GM10248 (cell line): ENCODE measurements at regions of chr16 and their contacts with region 1.

Region 1: DNA sequence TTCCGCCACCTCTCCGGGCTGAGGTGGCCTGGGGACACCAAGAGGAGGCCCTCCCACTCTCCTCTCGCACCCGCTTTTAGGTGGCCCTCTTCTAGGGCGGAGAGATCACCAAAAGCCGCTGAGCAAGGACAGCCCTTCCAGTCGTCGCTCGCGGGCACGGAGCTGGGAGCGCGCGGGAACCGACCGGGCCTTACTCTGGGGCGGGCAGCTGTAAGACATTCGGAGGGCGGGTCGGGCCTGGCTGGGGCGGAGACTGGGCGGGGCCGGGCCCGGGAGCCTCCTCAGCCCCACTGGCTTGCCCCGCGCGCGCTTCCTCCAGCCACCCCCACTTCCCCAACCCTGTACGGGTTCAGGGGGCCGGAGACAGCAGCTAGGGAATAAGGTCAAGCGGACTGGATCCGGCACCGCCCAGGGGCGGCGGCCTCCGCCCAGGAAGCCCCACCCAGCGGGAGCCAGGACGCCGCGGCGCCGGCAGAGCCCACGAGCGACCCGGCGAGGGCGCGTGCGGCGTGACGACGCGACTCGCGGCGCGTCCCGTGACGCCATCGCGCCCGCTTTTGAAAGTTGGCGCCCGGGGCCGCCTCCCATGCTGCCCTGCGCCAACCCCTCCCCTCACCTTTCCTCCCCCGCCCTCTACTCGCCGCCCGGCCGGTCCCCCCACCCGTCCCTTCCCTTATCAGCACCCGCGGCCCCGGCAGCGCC is 351 bp upstream of the CTCF start:
- DNase-seq: peak; percentile 96
- CTCF ChIP-seq: no peak

Region 2: DNA sequence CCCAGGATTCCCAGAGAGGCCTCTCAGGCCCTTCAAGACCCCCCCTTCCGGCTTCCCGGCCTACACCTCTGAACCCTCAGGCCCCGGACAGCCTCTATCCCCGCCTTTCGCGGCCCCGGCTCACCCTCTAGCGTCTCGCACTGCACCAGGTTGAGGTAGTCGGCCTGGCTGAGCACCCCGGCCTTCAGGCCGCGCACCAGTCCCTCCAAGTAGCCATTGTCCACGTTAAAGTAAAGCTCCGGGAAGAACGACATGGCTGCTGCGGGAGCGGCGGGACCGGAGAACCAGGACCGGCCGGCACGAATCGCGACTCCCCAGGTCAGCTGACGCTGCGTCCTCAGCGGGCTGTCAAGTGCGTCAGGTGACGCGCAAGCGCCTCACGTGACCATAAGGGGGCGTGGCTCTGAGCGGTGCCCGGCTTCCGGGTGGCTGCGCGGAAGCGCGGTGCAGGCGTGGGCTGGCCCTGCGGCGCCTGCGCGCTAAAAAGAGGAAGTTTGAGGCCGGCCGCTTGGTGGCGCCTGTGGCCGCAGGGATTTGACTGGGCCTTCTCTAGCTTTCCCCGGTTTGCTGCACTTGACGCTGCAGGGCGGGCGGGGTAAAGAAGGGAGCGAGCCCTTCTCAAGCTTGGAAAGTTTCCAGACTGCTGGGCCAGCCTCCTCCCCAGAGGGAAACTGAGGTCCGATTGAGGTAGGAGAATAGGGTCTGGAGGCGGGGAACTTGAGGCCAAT is 81.0 kb before region 1 on chr16 and contains the start of gene ATP6V0D1:
- CTCF ChIA-PET with region 1: interaction called, 11 read pairs
- POLR2A ChIA-PET with region 1: interaction called, 4 read pairs
- DNase-seq: peak; percentile 99
- CTCF ChIP-seq: peak; percentile 90

Region 3: DNA sequence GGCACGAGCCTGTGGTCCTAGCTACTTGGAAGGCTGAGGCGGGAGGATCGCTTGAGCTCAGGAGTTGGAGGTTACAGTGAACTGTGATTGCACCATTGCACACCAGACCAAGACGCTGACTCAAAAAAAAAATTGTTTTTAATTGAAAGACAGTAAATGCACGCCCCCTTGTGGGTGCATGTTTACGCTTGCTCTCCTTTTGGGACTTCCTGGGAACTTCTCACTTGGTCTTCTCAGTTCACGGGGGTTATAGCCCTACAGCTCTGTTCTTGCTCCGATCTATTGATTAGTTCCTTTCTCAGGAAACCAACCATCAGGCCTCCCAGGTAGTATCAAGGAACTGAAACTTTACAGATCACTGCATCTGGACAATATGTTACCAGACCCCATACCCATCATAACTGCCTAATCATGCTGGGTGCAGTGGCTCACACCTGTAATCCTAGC is 47.6 kb before region 1 on chr16:
- CTCF ChIA-PET with region 1: interaction called, 12 read pairs
- POLR2A ChIA-PET with region 1: no interaction called
- DNase-seq: peak; percentile 79
- CTCF ChIP-seq: peak; percentile 61

Region 4: GRCh38 chr16:67571981-67572431 is 10.0 kb after region 1 on chr16:
- CTCF ChIA-PET with region 1: interaction called, 27 read pairs
- POLR2A ChIA-PET with region 1: interaction called, 3 read pairs
- DNase-seq: no peak
- CTCF ChIP-seq: no peak

Region 5: DNA sequence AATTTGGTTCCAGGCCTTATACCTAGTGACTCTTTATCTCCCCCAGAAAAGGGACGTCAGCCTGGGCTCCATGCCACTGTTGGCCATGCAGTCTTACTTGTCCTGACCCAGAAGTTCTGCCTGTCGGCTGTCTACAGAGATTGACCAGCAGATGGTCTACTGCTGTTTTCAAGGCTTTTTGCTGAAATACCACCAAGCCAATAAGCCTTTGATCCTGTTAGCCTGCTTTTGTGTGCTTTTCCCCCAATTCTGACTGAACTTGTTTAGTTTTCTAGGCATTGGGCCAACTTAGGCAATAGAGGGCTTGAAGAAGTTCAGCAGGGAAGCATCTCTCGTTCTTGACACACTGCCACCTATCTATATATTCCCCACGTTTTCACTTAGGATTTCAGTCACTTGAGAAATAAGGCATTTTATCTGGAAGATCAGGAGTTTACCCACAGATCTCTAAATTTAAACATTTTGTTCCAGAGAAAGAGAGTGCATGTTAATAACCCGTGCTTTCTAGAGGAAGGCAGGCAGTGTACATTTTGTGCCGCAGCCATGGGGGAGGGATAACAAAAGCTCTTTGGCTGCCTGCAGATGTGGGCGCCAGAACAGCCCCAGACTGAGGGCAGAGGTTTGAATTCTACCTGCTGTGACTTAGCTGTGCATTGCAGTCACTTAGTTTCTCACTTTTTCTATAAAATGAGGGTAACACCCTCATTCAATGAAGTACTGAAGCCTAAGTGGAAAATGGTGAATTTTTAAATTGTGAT is 70.6 kb after region 1 on chr16:
- CTCF ChIA-PET with region 1: interaction called, 10 read pairs
- POLR2A ChIA-PET with region 1: no interaction called
- DNase-seq: no peak
- CTCF ChIP-seq: no peak

Region 6: GRCh38 chr16:67660564-67661028 is 98.6 kb after region 1 on chr16 and contains the start of gene PARD6A:
- CTCF ChIA-PET with region 1: interaction called, 12 read pairs
- POLR2A ChIA-PET with region 1: no interaction called
- DNase-seq: peak; percentile 100
- CTCF ChIP-seq: no peak

Region 7: GRCh38 chr16:67667817-67668494 is 106.0 kb after region 1 on chr16:
- CTCF ChIA-PET with region 1: interaction called, 10 read pairs
- POLR2A ChIA-PET with region 1: no interaction called
- DNase-seq: peak; percentile 92
- CTCF ChIP-seq: peak; percentile 86

Region 8: DNA sequence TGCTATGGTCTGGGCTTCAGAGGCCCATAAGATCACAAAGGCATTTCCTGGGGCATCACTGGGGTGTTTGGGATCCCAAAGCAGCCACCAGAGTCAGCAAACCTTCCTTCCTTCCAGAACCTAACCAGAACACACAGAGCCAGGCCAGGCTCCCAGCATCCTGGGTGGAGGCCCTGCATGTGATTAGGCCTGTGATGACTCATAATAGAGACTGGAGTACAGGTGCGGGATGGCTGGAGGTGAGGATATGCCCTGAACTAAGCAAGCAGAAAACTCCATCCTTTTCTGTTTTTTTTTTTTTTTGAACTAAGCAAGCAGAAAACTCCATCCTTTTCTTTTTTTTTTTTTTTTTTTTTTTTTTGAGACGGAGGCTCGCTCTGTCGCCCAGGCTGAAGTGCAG is 174.9 kb after region 1 on chr16:
- CTCF ChIA-PET with region 1: no interaction called
- POLR2A ChIA-PET with region 1: no interaction called
- DNase-seq: no peak
- CTCF ChIP-seq: no peak